SK-N-SH (cell line): ENCODE measurements at regions of chr4 and their contacts with region 1.

Region 1: GRCh38 chr4:108045694-108046038 is 56.0 kb downstream of the HADH start:
- DNase-seq: no peak
- H3K4me3 ChIP-seq: no peak overlapping the region
- H3K27ac ChIP-seq: no peak overlapping the region
- H3K4me1 ChIP-seq: peaks cover 0 to 6% of the 10 kb centered on the region in 2 experiments; a peak in 1 of 4 replicates
- H3K27me3 ChIP-seq: no peaks in the 10 kb centered on the region
- CTCF ChIP-seq: no peak
- EP300 ChIP-seq: no peak
- RAD21 ChIP-seq: no peak

Region 2: DNA sequence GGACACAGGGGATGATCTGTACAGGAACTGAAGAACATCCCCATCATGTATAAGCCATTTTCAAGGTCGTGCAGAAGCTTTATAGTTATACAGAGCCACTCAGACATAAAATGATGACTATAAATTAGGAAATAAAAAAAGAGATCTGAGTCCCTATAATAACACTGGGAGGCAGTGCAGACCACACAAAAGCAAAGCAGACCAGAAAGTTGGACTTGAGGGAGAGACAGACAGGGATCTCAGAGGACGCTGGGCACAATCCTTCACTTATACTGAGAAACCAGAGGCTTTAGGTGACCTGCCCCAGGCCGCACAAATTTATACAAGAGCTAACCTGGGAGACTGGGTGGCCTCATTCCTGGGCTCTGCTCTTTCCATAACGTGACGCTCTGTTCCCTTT is 14.5 kb after region 1 on chr4:
- CTCF ChIA-PET with region 1: interaction called, 15 read pairs
- POLR2A ChIA-PET with region 1: no interaction called
- DNase-seq: peak; percentile 54
- H3K4me3 ChIP-seq: no peak overlapping the region
- H3K27ac ChIP-seq: no peak overlapping the region
- H3K4me1 ChIP-seq: no peaks in the 10 kb centered on the region
- H3K27me3 ChIP-seq: peaks cover 64% of the 10 kb centered on the region
- CTCF ChIP-seq: peak; percentile 37
- EP300 ChIP-seq: no peak
- RAD21 ChIP-seq: peak; percentile 89